ENCODE measurements at regions of chr22 and their contacts with region 1.

Region 1: GRCh38 chr22:45597460-45598192 is 74.0 kb upstream of the ATXN10 start:
- DNase-seq: peak in 1 of 5 donors; percentile 23
- ATAC-seq: peak in 1 of 4 donors; percentile 12
- H3K4me3 ChIP-seq: no peak overlapping the region
- H3K27ac ChIP-seq: no peak overlapping the region
- H3K4me1 ChIP-seq: no peaks in the 10 kb centered on the region
- H3K27me3 ChIP-seq: no peaks in the 10 kb centered on the region
- CTCF ChIP-seq: no peak
- POLR2A ChIP-seq: no peak

Region 2: GRCh38 chr22:45502215-45503049 is 95.2 kb before region 1 on chr22 and contains the start of gene FBLN1:
- intact Hi-C with region 1: no loop called
- DNase-seq: peak; percentile 44 to 69 (median 57)
- ATAC-seq: peak in 2 of 4 donors; percentile 55 to 74
- H3K4me3 ChIP-seq: peak within 1 kb of the TSS; percentile 35 to 72 (median 60)
- H3K27ac ChIP-seq: peak within 1 kb of the TSS in 11 of 12 donors; percentile 23 to 84 (median 73)
- H3K4me1 ChIP-seq: peaks cover 0 to 42% (median 6%) of the 10 kb centered on the region in 12 donors
- H3K27me3 ChIP-seq: peaks cover 0 to 41% (median 20%) of the 10 kb centered on the region in 9 donors
- CTCF ChIP-seq: peak in 5 of 12 donors; percentile 16 to 37 (median 27)
- POLR2A ChIP-seq: no peak
- total RNA-seq, gene FBLN1: 30.0 to 239 (median 50.3) TPM

Region 3: GRCh38 chr22:45537734-45538181 is 59.9 kb before region 1 on chr22:
- intact Hi-C with region 1: no loop called
- DNase-seq: peak in 3 of 5 donors; percentile 60 to 74 (median 62)
- ATAC-seq: peak; percentile 64 to 83 (median 76)
- H3K4me3 ChIP-seq: no peak overlapping the region
- H3K27ac ChIP-seq: peak overlapping the region in 10 of 12 donors; percentile 3 to 69 (median 26)
- H3K4me1 ChIP-seq: peaks cover 0 to 21% (median 14%) of the 10 kb centered on the region in 12 donors
- H3K27me3 ChIP-seq: no peaks in the 10 kb centered on the region
- CTCF ChIP-seq: no peak
- POLR2A ChIP-seq: no peak

Region 4: GRCh38 chr22:45656577-45656976 is 59.0 kb after region 1 on chr22:
- intact Hi-C with region 1: no loop called
- DNase-seq: no peak
- ATAC-seq: no peak
- H3K4me3 ChIP-seq: no peak overlapping the region
- H3K27ac ChIP-seq: no peak overlapping the region
- H3K4me1 ChIP-seq: no peaks in the 10 kb centered on the region
- H3K27me3 ChIP-seq: peaks cover 0 to 3% (median 0%) of the 10 kb centered on the region in 9 donors
- CTCF ChIP-seq: no peak
- POLR2A ChIP-seq: no peak

Region 5: GRCh38 chr22:46116491-46116958 is 518.9 kb after region 1 on chr22:
- intact Hi-C with region 1: loop called in 1 of 10 experiments (anchors 10 kb)
- DNase-seq: peak; percentile 94 to 97 (median 95)
- ATAC-seq: peak; percentile 73 to 83 (median 75)
- H3K4me3 ChIP-seq: no peak overlapping the region
- H3K27ac ChIP-seq: peak overlapping the region in 11 of 12 donors; percentile 49 to 86 (median 81)
- H3K4me1 ChIP-seq: peaks cover 19 to 68% (median 47%) of the 10 kb centered on the region in 12 donors
- H3K27me3 ChIP-seq: no peaks in the 10 kb centered on the region
- CTCF ChIP-seq: peak; percentile 57 to 99 (median 76)
- POLR2A ChIP-seq: no peak

Measured in heart left ventricle (tissue), 16 donors.